Posterior vena cava (tissue), 2 donors: ENCODE measurements at regions of chr18 and their contacts with region 1.

Region 1: GRCh38 chr18:58529714-58530354 is 99.1 kb downstream of the ALPK2 start:
- DNase-seq: no peak

Region 2: DNA sequence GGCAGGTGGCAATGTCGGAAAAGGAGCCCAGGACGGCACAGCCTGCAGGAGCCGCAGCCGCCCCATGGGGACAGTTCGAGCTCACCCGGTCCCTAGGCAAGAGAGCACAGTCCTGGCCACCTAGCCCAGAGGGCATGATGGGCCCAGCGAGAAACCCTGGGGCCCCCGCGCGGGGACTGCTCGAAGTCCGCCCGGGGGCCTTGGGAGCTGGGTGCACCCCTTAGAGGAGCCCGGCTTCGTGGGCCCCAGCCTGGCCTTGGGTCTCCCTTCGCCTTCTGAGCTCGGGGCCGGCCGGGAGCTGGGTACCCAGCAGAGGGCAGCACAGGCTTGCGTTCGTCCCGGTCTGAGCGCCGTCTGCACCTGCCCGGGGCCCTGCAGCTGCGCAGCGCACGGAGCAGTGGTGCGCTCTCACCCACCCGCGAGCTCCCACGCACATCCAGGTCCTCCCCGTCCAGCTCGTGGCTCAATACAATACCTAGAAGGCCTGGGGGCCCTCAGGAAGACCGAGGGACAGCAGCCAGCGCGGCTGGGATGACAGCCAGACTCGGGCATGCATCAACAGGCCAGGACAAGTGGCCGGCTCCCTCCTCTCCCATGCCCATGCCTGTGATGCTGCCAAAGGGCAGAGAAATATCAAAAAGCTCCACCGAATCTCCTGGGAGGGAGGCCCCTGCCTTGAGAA is 238.6 kb after region 1 on chr18:
- intact Hi-C with region 1: loop called in 1 of 2 experiments (anchors 10 kb)
- DNase-seq: peak; percentile 91

Region 3: GRCh38 chr18:59033359-59033758 is 503.5 kb after region 1 on chr18:
- intact Hi-C with region 1: no loop called
- DNase-seq: no peak

Region 4: GRCh38 chr18:59079264-59079972 is 549.6 kb after region 1 on chr18:
- intact Hi-C with region 1: loop called in 1 of 2 experiments (anchors 5 kb)
- DNase-seq: no peak